Natural killer cell (primary cell): ENCODE measurements at regions of chr3 and their contacts with region 1.

Region 1: GRCh38 chr3:106068795-106069194 is 200.0 kb upstream of the CBLB start:
- DNase-seq: peak in 1 of 2 donors; percentile 60
- ATAC-seq: peak; percentile 95 to 99 (median 97)
- H3K4me3 ChIP-seq: no peak overlapping the region
- H3K4me3 Mint-ChIP-seq: peak overlapping the region; percentile 73
- H3K27ac ChIP-seq: peak overlapping the region; percentile 82
- H3K27ac Mint-ChIP-seq: peak overlapping the region; percentile 90 to 93
- H3K4me1 ChIP-seq: peaks cover 11% of the 10 kb centered on the region
- H3K4me1 Mint-ChIP-seq: peaks cover 18 to 21% of the 10 kb centered on the region in 2 donors
- H3K27me3 ChIP-seq: no peaks in the 10 kb centered on the region
- H3K27me3 Mint-ChIP-seq: no peaks in the 10 kb centered on the region
- CTCF ChIP-seq: no peak

Region 2: DNA sequence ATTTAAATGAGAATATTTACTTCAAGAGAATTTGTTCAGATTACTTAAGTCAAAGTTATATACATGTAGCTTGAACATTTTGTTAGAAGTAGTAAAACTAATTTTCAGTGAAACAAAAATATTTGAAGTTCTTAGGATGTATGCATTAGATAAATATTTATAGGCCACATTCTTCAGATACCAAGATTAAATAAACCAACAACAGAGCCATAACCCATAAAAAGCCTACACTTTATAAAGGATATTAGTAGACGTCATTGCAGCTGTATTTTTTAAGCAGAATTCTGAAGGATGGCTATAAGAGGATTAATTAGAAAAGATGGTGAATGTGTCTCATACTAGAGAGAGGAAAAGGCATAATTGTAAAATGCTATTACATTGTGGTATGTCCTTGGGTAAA is 1151.8 kb before region 1 on chr3:
- intact Hi-C with region 1: no loop called
- DNase-seq: no peak
- ATAC-seq: no peak
- H3K4me3 ChIP-seq: no peak overlapping the region
- H3K4me3 Mint-ChIP-seq: no peak overlapping the region
- H3K27ac ChIP-seq: no peak overlapping the region
- H3K27ac Mint-ChIP-seq: no peak overlapping the region
- H3K4me1 ChIP-seq: no peaks in the 10 kb centered on the region
- H3K4me1 Mint-ChIP-seq: no peaks in the 10 kb centered on the region
- H3K27me3 ChIP-seq: no peaks in the 10 kb centered on the region
- H3K27me3 Mint-ChIP-seq: no peaks in the 10 kb centered on the region
- CTCF ChIP-seq: no peak

Region 3: DNA sequence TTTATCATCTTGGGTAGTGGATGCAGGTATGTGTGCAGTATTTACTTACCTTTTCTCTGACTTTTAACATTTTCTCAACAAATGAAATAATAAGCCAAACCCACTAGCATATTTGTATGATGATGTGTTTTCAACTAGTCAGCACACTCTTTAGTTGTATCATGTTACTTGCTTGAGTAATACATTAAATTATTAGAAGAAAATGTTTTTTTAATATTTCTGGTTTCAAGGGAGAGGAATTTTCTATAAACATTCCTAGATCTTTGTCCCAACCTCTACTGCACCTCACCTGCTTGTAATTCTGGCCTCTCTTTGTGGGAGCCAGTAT is 38.2 kb before region 1 on chr3:
- intact Hi-C with region 1: loop called (anchors 2 kb)
- DNase-seq: no peak
- ATAC-seq: no peak
- H3K4me3 ChIP-seq: no peak overlapping the region
- H3K4me3 Mint-ChIP-seq: no peak overlapping the region
- H3K27ac ChIP-seq: no peak overlapping the region
- H3K27ac Mint-ChIP-seq: no peak overlapping the region
- H3K4me1 ChIP-seq: no peaks in the 10 kb centered on the region
- H3K4me1 Mint-ChIP-seq: peaks cover 14 to 25% of the 10 kb centered on the region in 2 donors
- H3K27me3 ChIP-seq: no peaks in the 10 kb centered on the region
- H3K27me3 Mint-ChIP-seq: peaks cover 0 to 9% of the 10 kb centered on the region in 2 donors
- CTCF ChIP-seq: no peak